Mammary epithelial cell (primary cell): ENCODE measurements at regions of chr2 and their contacts with region 1.

Region 1: GRCh38 chr2:54330162-54330925 is 74.3 kb upstream of the TSPYL6 start:
- DNase-seq: peak; percentile 92
- H3K4me3 ChIP-seq: peak overlapping the region; percentile 41 to 62 (median 59)
- H3K27ac ChIP-seq: peak overlapping the region; percentile 68
- H3K4me1 ChIP-seq: peaks cover 19% of the 10 kb centered on the region
- H3K27me3 ChIP-seq: no peaks in the 10 kb centered on the region
- CTCF ChIP-seq: no peak

Region 2: DNA sequence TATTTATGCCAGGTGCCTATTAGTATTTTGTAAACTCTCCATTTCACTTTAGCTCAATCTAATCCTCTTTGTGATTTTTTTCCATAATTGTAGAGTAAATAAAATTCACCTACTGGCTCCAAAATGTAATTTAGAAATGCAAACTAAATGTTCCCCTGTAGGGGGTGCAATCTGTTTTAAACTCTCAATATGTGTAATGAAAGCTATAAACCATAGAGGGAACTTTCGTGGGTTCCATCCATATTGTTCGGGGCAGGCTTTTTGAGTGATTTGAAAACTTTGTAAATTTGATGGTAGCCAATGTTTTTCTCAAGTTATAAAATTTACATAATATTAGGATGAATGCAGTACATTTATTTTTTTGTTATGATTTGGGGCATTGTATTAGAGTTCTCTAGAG is 123.7 kb before region 1 on chr2:
- CTCF ChIA-PET with region 1: no interaction called
- dilution Hi-C with region 1: no loop called
- in situ Hi-C with region 1: no loop called
- intact Hi-C with region 1: loop called (anchors 5 kb)
- DNase-seq: peak; percentile 20
- H3K4me3 ChIP-seq: no peak overlapping the region
- H3K27ac ChIP-seq: no peak overlapping the region
- H3K4me1 ChIP-seq: peaks cover 3% of the 10 kb centered on the region
- H3K27me3 ChIP-seq: no peaks in the 10 kb centered on the region
- CTCF ChIP-seq: peak; percentile 49 to 53